ENCODE measurements at regions of chr3 and their contacts with region 1.

Region 1: GRCh38 chr3:69065318-69065964 is 13.3 kb upstream of the TMF1 start:
- DNase-seq: peak; percentile 16
- H3K4me3 Mint-ChIP-seq: peak overlapping the region; percentile 41
- H3K27ac Mint-ChIP-seq: peak overlapping the region; percentile 57
- H3K4me1 Mint-ChIP-seq: peaks cover 37% of the 10 kb centered on the region
- H3K27me3 Mint-ChIP-seq: no peaks in the 10 kb centered on the region

Region 2: GRCh38 chr3:69079269-69080159 is 14.1 kb after region 1 on chr3:
- intact Hi-C with region 1: loop called (anchors 1 kb)
- DNase-seq: no peak
- H3K4me3 Mint-ChIP-seq: peak overlapping the region; percentile 89
- H3K27ac Mint-ChIP-seq: peak overlapping the region; percentile 73
- H3K4me1 Mint-ChIP-seq: peaks cover 67% of the 10 kb centered on the region
- H3K27me3 Mint-ChIP-seq: no peaks in the 10 kb centered on the region

Region 3: GRCh38 chr3:69288161-69288895 is 222.9 kb after region 1 on chr3:
- intact Hi-C with region 1: no loop called
- DNase-seq: no peak
- H3K4me3 Mint-ChIP-seq: peak overlapping the region; percentile 48
- H3K27ac Mint-ChIP-seq: peak overlapping the region; percentile 71
- H3K4me1 Mint-ChIP-seq: peaks cover 32% of the 10 kb centered on the region
- H3K27me3 Mint-ChIP-seq: no peaks in the 10 kb centered on the region

Measured in activated T-helper 1 cell treated with anti-CD3 and anti-CD28 coated beads, Interleukin-12 subunit alpha, Interleukin-12 subunit beta, Interleukin-2, Interleukin-4 antibody, amounts not matched to agents 30 ng/mL and 10 ng/mL and 1 ng/mL, durations not matched to agents 14 hours and 24 hours and 36 hours (primary cell).